Activated T-helper 1 cell treated with anti-CD3 and anti-CD28 coated beads, Interleukin-12 subunit alpha, Interleukin-12 subunit beta, Interleukin-2, Interleukin-4 antibody, amounts not matched to agents 30 ng/mL and 10 ng/mL and 1 ng/mL, durations not matched to agents 14 hours and 24 hours and 36 hours (primary cell): ENCODE measurements at regions of chr5 and their contacts with region 1.

Region 1: DNA sequence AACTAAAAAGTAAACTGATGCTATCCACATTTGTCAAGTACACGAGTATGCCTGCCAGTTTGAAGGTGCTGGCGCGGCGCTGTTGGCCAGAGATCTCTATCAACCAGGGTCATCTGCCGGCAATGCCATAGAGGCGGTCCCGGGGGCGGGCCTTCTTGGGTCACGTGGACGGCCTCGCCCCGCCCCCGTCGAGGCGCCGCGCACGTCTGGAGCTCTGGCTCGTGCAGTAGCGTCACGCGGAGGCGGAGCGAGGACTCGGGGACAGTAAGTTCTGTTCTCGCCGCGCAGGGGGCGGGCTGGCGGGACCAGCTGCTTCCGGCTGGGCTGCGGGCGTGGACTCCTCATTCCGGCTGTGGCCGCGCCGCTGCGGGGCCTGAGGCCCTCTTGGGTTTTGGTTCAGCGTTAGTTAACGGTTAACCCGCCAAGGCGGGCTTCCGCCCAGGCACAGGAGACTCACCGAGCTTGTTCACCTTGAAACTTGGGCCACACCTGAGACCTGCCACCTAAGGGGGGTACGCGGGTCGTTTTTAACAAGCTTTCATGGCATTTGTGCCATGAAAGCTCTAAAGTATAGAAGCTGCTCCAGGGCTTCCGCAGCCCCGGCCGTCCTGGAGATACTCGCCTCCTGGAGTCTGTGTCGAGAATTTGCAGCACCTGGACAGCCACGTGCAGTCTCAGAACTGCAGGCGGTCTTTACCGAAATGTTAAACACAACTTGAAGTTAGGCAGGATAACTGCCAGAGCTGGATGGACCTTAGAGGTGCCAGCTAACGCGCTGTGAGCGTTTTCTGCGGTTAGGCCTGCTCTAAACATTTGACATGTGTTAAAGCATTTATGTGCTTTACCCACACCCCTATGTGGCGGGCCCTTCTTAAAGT is at the start of gene RFESD:
- DNase-seq: peak; percentile 94
- H3K4me3 Mint-ChIP-seq: peak within 1 kb of the TSS; percentile 76
- H3K27ac Mint-ChIP-seq: peak within 1 kb of the TSS; percentile 75
- H3K4me1 Mint-ChIP-seq: peaks cover 27% of the 10 kb centered on the region
- H3K27me3 Mint-ChIP-seq: peaks cover 3% of the 10 kb centered on the region
- total RNA-seq, gene RFESD: 3.0 and 6.0 TPM in 2 replicates

Region 2: GRCh38 chr5:94793113-94793815 is 853.5 kb before region 1 on chr5:
- intact Hi-C with region 1: loop called (anchors 5 kb)
- DNase-seq: peak; percentile 47
- H3K4me3 Mint-ChIP-seq: peak overlapping the region; percentile 64
- H3K27ac Mint-ChIP-seq: peak overlapping the region; percentile 94
- H3K4me1 Mint-ChIP-seq: peaks cover 67% of the 10 kb centered on the region
- H3K27me3 Mint-ChIP-seq: no peaks in the 10 kb centered on the region

Region 3: DNA sequence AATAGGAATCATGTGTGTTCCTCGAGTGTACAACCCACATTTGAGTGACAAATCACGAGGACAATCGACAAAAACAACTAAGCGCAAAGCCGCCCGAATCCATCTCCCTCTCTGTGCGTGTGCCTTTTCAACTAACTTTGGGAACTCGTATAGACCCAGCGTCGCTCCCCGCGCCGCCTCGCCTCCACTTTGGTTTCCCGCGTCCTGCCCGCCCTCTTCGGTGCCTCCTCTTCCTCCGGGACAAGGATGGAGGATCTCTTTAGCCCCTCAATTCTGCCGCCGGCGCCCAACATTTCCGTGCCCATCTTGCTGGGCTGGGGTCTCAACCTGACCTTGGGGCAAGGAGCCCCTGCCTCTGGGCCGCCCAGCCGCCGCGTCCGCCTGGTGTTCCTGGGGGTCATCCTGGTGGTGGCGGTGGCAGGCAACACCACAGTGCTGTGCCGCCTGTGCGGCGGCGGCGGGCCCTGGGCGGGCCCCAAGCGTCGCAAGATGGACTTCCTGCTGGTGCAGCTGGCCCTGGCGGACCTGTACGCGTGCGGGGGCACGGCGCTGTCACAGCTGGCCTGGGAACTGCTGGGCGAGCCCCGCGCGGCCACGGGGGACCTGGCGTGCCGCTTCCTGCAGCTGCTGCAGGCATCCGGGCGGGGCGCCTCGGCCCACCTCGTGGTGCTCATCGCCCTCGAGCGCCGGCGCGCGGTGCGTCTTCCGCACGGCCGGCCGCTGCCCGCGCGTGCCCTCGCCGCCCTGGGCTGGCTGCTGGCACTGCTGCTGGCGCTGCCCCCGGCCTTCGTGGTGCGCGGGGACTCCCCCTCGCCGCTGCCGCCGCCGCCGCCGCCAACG is 26.5 kb before region 1 on chr5 and contains the start of gene GPR150:
- intact Hi-C with region 1: loop called (anchors 1 kb)
- DNase-seq: peak; percentile 46
- H3K4me3 Mint-ChIP-seq: peak within 1 kb of the TSS; percentile 83
- H3K27ac Mint-ChIP-seq: peak within 1 kb of the TSS; percentile 72
- H3K4me1 Mint-ChIP-seq: peaks cover 38% of the 10 kb centered on the region
- H3K27me3 Mint-ChIP-seq: peaks cover 22% of the 10 kb centered on the region
- total RNA-seq, gene GPR150: 0.22 and 0.26 TPM in 2 replicates

Region 4: GRCh38 chr5:95760273-95761191 is 113.7 kb after region 1 on chr5:
- intact Hi-C with region 1: loop called (anchors 1 kb)
- DNase-seq: no peak
- H3K4me3 Mint-ChIP-seq: peak overlapping the region; percentile 52
- H3K27ac Mint-ChIP-seq: peak overlapping the region; percentile 45
- H3K4me1 Mint-ChIP-seq: peaks cover 30% of the 10 kb centered on the region
- H3K27me3 Mint-ChIP-seq: peaks cover 22% of the 10 kb centered on the region

Region 5: DNA sequence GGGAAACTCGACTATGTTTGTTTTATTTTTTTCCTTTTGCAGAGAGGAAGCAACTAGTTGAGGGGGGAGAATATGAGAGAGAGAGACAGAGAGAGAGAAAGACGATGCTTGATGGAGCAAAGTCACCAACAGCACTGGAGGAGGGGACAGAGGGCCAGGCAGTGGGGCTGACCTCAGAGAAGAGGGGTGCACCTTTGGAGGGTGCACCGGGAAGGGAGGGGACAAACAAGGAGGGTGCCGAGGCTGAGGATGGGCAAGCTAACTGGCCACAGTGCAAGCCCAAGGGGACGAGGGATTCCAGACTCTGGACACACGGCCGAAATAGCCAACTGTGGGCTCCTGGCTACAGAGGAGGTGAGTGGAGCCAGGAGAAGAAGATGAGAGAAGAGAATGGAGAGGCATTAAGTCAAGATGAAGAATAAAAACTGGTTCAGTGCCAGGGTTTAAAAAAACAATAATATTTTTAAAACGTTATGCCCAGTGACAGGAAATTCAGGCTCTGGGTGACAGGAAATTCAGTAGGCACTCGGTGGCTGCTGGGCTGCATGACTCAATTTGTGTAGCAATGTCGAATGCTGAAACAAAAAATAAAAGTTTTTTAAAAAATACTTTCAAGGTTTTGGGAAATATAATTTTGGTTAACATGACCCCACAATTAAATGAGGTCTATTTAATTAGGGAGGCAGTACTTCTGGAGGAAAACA is 189.0 kb after region 1 on chr5:
- intact Hi-C with region 1: loop called (anchors 1 kb)
- DNase-seq: no peak
- H3K4me3 Mint-ChIP-seq: peak overlapping the region; percentile 76
- H3K27ac Mint-ChIP-seq: peak overlapping the region; percentile 54
- H3K4me1 Mint-ChIP-seq: peaks cover 37% of the 10 kb centered on the region
- H3K27me3 Mint-ChIP-seq: peaks cover 2% of the 10 kb centered on the region

Region 6: GRCh38 chr5:96595300-96596090 is 948.7 kb after region 1 on chr5:
- intact Hi-C with region 1: loop called (anchors 5 kb)
- DNase-seq: no peak
- H3K4me3 Mint-ChIP-seq: no peak overlapping the region
- H3K27ac Mint-ChIP-seq: no peak overlapping the region
- H3K4me1 Mint-ChIP-seq: peaks cover 29% of the 10 kb centered on the region
- H3K27me3 Mint-ChIP-seq: peaks cover 15% of the 10 kb centered on the region

Region 7: DNA sequence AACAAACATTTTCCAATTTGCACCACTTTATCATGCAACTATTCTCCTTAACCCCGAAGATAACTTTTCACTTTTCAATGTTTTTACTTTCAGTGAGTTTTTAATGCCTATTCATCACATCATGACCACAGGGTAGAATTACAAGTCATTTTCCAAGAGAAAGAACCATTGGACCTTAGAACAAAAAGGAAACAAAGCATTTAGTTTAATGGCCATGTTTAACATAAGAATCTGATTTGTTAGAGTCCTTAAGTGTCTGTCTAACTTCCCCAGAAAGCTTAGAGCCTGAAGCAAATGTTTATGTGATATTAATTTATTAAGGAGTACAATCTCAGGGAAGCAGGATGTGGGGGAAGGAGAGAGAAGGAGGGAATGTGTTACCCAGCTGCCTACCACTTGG is 1862.1 kb after region 1 on chr5:
- intact Hi-C with region 1: no loop called
- DNase-seq: no peak
- H3K4me3 Mint-ChIP-seq: no peak overlapping the region
- H3K27ac Mint-ChIP-seq: no peak overlapping the region
- H3K4me1 Mint-ChIP-seq: no peaks in the 10 kb centered on the region
- H3K27me3 Mint-ChIP-seq: no peaks in the 10 kb centered on the region